HEK293 (cell line): ENCODE measurements at regions of chr2 and their contacts with region 1.

Region 1: GRCh38 chr2:229641676-229642075 is 72.7 kb downstream of the DNER start:
- H3K4me3 ChIP-seq: no peak overlapping the region
- H3K27ac ChIP-seq: no peak overlapping the region
- H3K4me1 ChIP-seq: no peaks in the 10 kb centered on the region
- CTCF ChIP-seq: no peak

Region 2: GRCh38 chr2:229572507-229573271 is 69.0 kb before region 1 on chr2:
- CTCF ChIA-PET with region 1: no interaction called
- POLR2A ChIA-PET with region 1: no interaction called
- H3K4me3 ChIP-seq: no peak overlapping the region
- H3K27ac ChIP-seq: no peak overlapping the region
- H3K4me1 ChIP-seq: no peaks in the 10 kb centered on the region
- CTCF ChIP-seq: no peak

Region 3: GRCh38 chr2:229653531-229653930 is 11.9 kb after region 1 on chr2:
- CTCF ChIA-PET with region 1: interaction called, 11 read pairs
- POLR2A ChIA-PET with region 1: no interaction called
- H3K4me3 ChIP-seq: no peak overlapping the region
- H3K27ac ChIP-seq: no peak overlapping the region
- H3K4me1 ChIP-seq: peaks cover 3% of the 10 kb centered on the region; the same call in 1 of the 2 replicates
- CTCF ChIP-seq: no peak